HAP-1 (cell line): ENCODE measurements at regions of chr4 and their contacts with region 1.

Region 1: GRCh38 chr4:180578175-180578574 is 1665.0 kb upstream of the TENM3 start:
- DNase-seq: no peak
- H3K4me3 ChIP-seq: no peak overlapping the region
- H3K4me1 ChIP-seq: peaks cover 4% of the 10 kb centered on the region; the same call in 1 of the 2 replicates
- H3K27me3 ChIP-seq: no peaks in the 10 kb centered on the region

Region 2: GRCh38 chr4:179586460-179586859 is 991.7 kb before region 1 on chr4:
- in situ Hi-C with region 1: no loop called
- DNase-seq: no peak
- H3K4me3 ChIP-seq: no peak overlapping the region
- H3K4me1 ChIP-seq: peaks cover 10% of the 10 kb centered on the region
- H3K27me3 ChIP-seq: no peaks in the 10 kb centered on the region

Region 3: DNA sequence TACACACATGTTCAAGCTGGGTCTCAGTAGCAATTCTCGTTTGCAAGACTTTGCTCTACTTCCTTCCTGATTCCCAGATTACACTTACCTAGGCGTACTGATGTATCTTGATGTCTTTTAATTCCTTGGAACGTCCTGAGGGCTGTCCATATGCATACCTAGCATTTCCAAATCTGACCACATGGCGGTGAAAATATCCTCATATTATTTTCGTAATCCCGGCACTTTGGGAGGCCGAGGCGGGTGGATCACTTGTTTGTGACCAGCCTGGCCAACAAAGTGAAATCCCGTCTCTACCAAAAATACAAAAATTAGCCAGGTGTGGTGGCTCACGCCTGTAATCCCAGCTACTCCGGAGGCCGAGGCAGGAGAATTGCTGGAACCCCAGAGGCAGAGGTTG is 121.2 kb before region 1 on chr4:
- in situ Hi-C with region 1: loop called (anchors 10 kb)
- DNase-seq: peak in 1 of 2 experiments; percentile 54
- H3K4me3 ChIP-seq: no peak overlapping the region
- H3K4me1 ChIP-seq: peaks cover 34% of the 10 kb centered on the region
- H3K27me3 ChIP-seq: no peaks in the 10 kb centered on the region